Brain microvascular endothelial cell (primary cell): ENCODE measurements at regions of chr6 and their contacts with region 1.

Region 1: DNA sequence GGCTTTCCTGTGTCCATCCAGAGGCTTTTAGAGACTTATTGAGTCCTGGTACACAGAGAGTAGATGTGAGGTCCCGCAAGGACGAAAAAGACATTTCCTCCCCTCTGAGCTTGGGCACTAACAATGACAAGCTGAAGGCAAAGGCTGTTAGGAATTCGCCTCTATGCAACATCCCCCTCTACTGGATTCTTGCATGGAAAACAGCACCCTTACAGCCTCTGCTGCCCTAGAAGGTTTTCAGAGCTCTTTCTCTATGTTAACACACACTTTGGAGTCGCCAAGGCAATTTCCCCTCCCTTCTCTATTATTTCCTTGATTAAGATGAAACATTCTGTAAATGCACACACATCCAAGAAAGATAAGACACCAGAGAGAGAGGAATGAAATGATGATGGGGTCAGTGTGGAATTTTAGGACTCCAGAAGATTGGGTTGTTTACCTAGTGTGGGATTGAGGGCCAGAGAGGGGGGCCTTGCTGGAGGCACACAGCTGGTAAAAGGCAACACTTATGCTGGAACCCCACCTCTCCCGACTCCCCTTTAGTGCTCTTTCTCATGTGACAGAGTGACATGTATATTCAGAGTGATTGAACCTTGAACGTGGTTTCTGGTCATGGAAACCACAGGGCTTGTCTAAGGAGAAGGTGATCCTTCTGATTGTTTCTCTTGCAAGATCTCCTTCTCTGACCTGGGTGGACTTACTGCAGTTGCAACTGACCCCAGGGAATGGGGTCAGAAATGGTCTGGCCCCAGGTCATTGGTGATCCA is 300.7 kb downstream of the CLIC5 start:
- DNase-seq: peak; percentile 86
- H3K4me3 ChIP-seq: no peak overlapping the region
- H3K27ac ChIP-seq: peak overlapping the region; percentile 27
- H3K27me3 ChIP-seq: no peaks in the 10 kb centered on the region
- CTCF ChIP-seq: peak; percentile 93

Region 2: GRCh38 chr6:45445749-45446549 is 269.0 kb before region 1 on chr6:
- in situ Hi-C with region 1: loop called (anchors 25 kb)
- DNase-seq: peak; percentile 98
- H3K4me3 ChIP-seq: no peak overlapping the region
- H3K27ac ChIP-seq: peak overlapping the region; percentile 72
- H3K27me3 ChIP-seq: no peaks in the 10 kb centered on the region
- CTCF ChIP-seq: no peak

Region 3: GRCh38 chr6:45830441-45831139 is 115.7 kb after region 1 on chr6:
- in situ Hi-C with region 1: no loop called
- DNase-seq: no peak
- H3K4me3 ChIP-seq: no peak overlapping the region
- H3K27ac ChIP-seq: no peak overlapping the region
- H3K27me3 ChIP-seq: no peaks in the 10 kb centered on the region
- CTCF ChIP-seq: no peak

Region 4: DNA sequence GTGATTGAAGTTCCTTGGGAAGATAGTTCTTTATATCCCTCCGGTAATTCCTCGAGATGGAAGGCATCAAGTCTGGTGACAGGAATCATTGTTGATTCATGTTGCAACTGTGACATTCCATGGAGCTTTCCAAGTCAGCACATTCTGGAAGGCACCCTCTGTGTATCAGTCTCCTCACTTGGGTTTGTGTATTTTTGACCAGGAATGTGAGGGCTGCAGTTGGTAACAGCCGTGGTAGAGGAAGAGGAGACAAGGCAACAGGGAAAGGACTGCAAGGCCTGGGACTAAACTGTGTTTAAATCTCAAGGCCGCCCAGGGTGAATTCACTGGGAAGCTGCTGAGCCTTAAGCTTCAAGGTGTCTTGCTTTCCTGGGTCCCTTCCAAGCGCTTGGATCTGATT is 201.8 kb after region 1 on chr6:
- in situ Hi-C with region 1: no loop called
- DNase-seq: no peak
- H3K4me3 ChIP-seq: no peak overlapping the region
- H3K27ac ChIP-seq: no peak overlapping the region
- H3K27me3 ChIP-seq: no peaks in the 10 kb centered on the region
- CTCF ChIP-seq: no peak